ENCODE measurements at regions of chr12 and their contacts with region 1.

Region 1: DNA sequence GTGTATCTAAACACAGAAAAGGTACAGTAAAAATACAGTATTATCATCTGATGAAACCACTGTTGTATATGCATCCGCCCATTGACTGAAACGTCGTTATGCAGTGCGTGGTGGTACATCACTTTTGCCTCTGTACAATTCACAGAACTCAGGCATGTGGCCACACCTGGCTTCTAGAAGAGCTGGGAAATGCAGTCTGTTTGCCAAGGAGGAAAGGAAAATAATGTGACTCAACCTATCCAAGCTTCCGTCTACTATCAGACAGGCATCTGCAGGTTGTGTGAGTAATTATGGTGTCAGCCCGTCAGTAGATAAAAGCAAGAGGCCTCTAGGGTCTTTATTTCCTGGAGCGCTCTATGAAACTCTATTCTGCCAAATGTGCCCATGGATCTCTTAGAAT is 111.6 kb downstream of the BBS10 start:
- DNase-seq: peak; percentile 97
- ATAC-seq: peak; percentile 93
- H3K4me3 ChIP-seq: peak overlapping the region; percentile 21; the same call in 1 of the 2 replicates
- H3K27ac ChIP-seq: peak overlapping the region; percentile 86
- H3K4me1 ChIP-seq: peaks cover 35% of the 10 kb centered on the region
- H3K27me3 ChIP-seq: no peaks in the 10 kb centered on the region
- CTCF ChIP-seq: no peak

Region 2: GRCh38 chr12:76055393-76055792 is 181.2 kb before region 1 on chr12:
- CTCF ChIA-PET with region 1: no interaction called
- POLR2A ChIA-PET with region 1: no interaction called
- intact Hi-C with region 1: loop called (anchors 10 kb)
- DNase-seq: no peak
- ATAC-seq: no peak
- H3K4me3 ChIP-seq: no peak overlapping the region
- H3K27ac ChIP-seq: no peak overlapping the region
- H3K4me1 ChIP-seq: no peaks in the 10 kb centered on the region
- H3K27me3 ChIP-seq: no peaks in the 10 kb centered on the region
- CTCF ChIP-seq: no peak

Region 3: GRCh38 chr12:76083904-76084862 is 152.4 kb before region 1 on chr12 and contains the start of gene NAP1L1:
- CTCF ChIA-PET with region 1: no interaction called
- POLR2A ChIA-PET with region 1: no interaction called
- intact Hi-C with region 1: loop called (anchors 10 kb)
- DNase-seq: peak; percentile 98
- ATAC-seq: peak; percentile 89
- H3K4me3 ChIP-seq: peak within 1 kb of the TSS; percentile 93
- H3K27ac ChIP-seq: peak within 1 kb of the TSS; percentile 76
- H3K4me1 ChIP-seq: peaks cover 31% of the 10 kb centered on the region
- H3K27me3 ChIP-seq: no peaks in the 10 kb centered on the region
- CTCF ChIP-seq: no peak
- total RNA-seq, gene NAP1L1: 200 and 247 TPM in 2 replicates

Measured in PC-3 (cell line).